ENCODE measurements at regions of chr9 and their contacts with region 1.

Region 1: DNA sequence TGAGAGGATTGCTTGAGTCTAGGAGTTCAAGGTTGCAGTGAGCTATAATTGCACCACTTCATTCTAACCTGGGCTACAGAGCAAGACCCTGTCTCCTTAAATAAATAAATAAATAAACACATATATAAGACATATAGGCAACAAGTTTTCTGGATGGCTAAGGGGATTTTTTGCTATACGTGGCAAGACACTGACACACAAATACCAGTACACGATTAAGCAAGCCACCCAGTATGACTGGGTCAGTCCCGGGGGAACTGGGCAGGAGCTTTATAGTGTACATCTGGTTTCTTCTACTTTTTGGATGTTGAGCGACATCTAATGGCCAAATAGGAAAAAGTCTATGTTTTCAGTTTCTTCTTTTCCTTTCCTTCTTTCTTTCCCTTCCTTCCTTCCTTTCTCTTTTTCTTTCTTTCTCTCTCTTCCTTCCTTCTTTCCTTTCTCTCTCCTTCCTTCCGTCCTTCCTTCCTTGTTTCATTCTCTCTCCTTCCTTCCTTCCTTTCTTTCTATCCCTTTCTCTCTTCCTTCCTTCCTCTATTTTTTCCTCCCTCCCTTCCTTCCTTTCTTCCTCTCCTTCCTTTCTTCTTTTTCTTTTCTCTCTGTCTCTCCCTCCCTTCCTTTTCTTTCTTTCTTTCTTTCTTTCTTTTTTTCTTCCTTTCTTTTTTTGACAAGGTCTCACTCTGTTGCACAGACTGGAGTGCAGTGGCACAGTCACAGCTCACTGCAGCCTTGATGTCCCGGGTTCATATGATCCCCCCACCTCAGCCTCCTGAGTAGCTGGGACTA is 47.0 kb upstream of the PLIN2 start:
- DNase-seq: peak; percentile 52
- H3K4me3 Mint-ChIP-seq: no peak overlapping the region
- H3K27ac Mint-ChIP-seq: no peak overlapping the region
- H3K4me1 Mint-ChIP-seq: peaks cover 33% of the 10 kb centered on the region
- H3K27me3 Mint-ChIP-seq: no peaks in the 10 kb centered on the region

Region 2: DNA sequence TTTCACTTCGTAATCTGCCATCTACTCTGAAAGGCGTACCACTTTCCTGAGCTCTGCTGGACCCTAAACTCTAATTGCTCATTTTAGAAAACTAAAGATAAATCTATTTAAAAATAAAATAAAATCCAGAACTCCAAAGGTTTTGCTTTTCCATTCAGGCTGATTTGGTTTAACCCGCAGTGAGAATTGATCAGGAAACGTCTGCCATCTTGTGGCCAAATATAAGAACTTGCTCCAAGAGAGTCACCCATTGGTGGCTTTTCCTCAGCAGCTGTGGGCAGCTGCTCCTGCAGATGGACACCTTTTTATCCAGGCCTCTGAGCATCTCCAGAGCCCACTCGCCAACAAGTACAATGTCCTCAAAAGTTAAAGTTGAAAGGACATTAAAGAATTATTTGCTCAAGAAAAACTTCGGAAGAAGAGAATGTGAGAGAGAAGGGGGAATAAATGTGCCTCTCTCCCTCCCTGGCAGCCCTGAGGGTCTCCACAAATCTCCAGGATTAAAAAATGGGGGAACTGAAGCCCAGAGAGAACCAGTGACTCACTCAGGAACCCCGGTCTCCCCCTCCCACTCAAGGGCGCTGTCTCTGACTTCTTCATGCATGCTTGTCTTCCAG is 145.4 kb before region 1 on chr9:
- CTCF ChIA-PET with region 1: interaction called, 14 read pairs
- DNase-seq: peak; percentile 46
- H3K4me3 Mint-ChIP-seq: no peak overlapping the region
- H3K27ac Mint-ChIP-seq: no peak overlapping the region
- H3K4me1 Mint-ChIP-seq: peaks cover 2% of the 10 kb centered on the region
- H3K27me3 Mint-ChIP-seq: peaks cover 11% of the 10 kb centered on the region

Region 3: DNA sequence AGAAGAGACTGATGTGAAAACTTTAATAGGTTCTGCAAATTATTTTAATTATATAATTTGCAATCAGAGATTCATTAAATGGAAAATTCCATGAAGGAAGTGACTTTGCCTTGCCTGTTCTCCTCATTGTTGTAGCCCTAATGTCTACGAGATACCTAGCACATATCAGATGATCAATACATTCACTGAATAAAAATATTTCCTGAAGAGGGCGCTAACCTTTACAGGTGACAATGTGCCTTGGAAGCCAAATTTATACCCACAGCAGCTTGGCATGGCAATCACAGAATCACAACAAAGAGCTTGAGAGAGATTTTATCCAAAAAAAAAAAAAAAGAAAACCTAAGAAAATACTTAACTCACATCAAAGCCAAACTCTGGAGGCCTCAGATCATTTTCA is 89.0 kb before region 1 on chr9:
- CTCF ChIA-PET with region 1: interaction called, 63 read pairs
- DNase-seq: no peak
- H3K4me3 Mint-ChIP-seq: no peak overlapping the region
- H3K27ac Mint-ChIP-seq: peak overlapping the region; percentile 0
- H3K4me1 Mint-ChIP-seq: peaks cover 2% of the 10 kb centered on the region
- H3K27me3 Mint-ChIP-seq: no peaks in the 10 kb centered on the region

Region 4: GRCh38 chr9:19127881-19128500 is 46.3 kb before region 1 on chr9:
- CTCF ChIA-PET with region 1: interaction called, 17 read pairs
- DNase-seq: peak; percentile 54
- H3K4me3 Mint-ChIP-seq: peak overlapping the region; percentile 92
- H3K27ac Mint-ChIP-seq: peak overlapping the region; percentile 98
- H3K4me1 Mint-ChIP-seq: peaks cover 61% of the 10 kb centered on the region
- H3K27me3 Mint-ChIP-seq: no peaks in the 10 kb centered on the region

Region 5: GRCh38 chr9:19193029-19193324 is 18.7 kb after region 1 on chr9:
- CTCF ChIA-PET with region 1: no interaction called
- DNase-seq: no peak
- H3K4me3 Mint-ChIP-seq: no peak overlapping the region
- H3K27ac Mint-ChIP-seq: no peak overlapping the region
- H3K4me1 Mint-ChIP-seq: peaks cover 2% of the 10 kb centered on the region
- H3K27me3 Mint-ChIP-seq: peaks cover 5% of the 10 kb centered on the region

Region 6: DNA sequence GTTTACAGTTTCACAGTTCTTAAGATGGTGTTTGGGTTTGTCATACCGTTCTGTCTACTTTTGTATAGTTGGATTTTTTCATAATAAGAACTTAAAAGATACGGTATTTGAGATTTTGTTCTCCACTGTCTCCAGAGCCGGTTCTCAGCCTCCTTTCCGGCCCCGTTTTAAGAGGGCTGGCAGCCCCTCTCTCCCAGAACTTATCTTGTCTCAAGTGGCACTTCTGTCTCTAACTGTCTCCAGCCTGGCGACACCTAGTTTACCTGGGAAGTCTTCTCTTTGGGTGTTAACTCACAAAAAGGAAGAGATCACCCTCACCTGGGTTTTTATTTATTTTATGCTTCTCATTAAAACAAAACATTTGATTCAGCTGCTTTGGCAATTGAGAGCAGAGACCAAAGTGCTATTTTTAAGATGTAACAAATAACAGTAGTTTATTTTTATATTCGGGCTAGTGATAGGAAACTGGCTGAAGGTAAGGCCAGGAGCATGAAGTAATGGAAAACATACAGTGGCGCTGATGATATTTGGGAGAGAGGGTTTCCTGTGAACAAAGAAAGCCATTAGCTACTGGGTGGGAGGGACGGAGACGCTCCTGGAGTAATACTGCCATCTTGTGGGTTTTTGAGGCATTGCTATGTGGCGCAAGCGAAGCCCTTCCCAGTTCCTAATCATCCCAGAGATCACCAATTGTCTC is 282.8 kb after region 1 on chr9:
- CTCF ChIA-PET with region 1: interaction called, 13 read pairs
- DNase-seq: peak; percentile 70
- H3K4me3 Mint-ChIP-seq: no peak overlapping the region
- H3K27ac Mint-ChIP-seq: no peak overlapping the region
- H3K4me1 Mint-ChIP-seq: peaks cover 12% of the 10 kb centered on the region
- H3K27me3 Mint-ChIP-seq: peaks cover 7% of the 10 kb centered on the region

Measured in activated naive CD4-positive, alpha-beta T cell treated with anti-CD3 and anti-CD28 coated beads, Interleukin-2, amount 10 ng/mL, durations not matched to agents 7 days and 5 days (primary cell).